ENCODE measurements at regions of chr9 and their contacts with region 1.

Region 1: DNA sequence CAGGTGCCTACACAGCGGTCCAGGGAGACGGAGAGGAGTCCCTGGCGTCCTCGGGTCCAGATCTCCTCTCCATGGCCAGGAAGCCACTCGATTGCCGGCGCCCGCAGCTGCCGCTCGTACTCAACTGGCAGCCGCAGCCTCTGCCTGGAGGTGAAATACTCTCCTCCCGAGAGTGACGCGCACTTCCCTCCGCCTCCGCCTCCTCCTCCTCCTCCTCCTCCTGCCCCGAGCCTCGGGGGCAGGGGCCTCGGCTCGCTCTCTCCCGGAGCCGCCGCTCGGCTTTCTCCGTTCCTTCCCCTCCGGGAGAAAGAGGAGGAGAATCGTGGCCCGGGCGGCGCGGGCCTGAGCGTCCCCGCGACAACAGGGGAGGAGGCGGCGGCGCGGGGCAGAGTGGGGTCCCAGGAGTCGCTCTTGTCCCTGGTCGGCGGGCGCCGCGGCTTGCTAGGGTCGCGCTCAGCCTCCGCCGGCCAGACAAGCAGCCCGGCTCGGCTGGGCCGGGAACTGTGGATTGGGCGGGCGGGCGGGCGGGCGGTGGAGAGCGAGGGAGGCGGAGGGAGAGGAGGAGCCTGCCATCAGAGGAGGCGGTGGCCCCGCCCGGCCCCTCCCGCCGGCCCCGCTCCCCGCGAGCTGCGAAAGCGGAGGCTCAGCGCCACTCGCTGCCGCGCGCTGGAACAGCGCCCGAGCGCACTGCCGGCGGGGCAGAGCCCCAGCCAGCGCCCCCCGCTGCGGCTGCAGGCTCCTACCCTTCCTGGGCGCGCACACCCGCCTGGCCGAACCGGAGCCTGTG is at the start of gene CEMIP2:
- DNase-seq: peak; percentile 82 to 94 (median 87)
- ATAC-seq: peak; percentile 78
- H3K4me3 ChIP-seq: peak within 1 kb of the TSS; percentile 72
- H3K4me3 Mint-ChIP-seq: peak within 1 kb of the TSS; percentile 98
- H3K27ac ChIP-seq: peak within 1 kb of the TSS; percentile 89
- H3K27ac Mint-ChIP-seq: peak within 1 kb of the TSS; percentile 99
- H3K4me1 ChIP-seq: peaks cover 36% of the 10 kb centered on the region
- H3K4me1 Mint-ChIP-seq: peaks cover 46% of the 10 kb centered on the region
- H3K27me3 ChIP-seq: no peaks in the 10 kb centered on the region
- H3K27me3 Mint-ChIP-seq: no peaks in the 10 kb centered on the region
- CTCF ChIP-seq: peak; percentile 58
- total RNA-seq, gene CEMIP2: 301 to 305 TPM

Region 2: DNA sequence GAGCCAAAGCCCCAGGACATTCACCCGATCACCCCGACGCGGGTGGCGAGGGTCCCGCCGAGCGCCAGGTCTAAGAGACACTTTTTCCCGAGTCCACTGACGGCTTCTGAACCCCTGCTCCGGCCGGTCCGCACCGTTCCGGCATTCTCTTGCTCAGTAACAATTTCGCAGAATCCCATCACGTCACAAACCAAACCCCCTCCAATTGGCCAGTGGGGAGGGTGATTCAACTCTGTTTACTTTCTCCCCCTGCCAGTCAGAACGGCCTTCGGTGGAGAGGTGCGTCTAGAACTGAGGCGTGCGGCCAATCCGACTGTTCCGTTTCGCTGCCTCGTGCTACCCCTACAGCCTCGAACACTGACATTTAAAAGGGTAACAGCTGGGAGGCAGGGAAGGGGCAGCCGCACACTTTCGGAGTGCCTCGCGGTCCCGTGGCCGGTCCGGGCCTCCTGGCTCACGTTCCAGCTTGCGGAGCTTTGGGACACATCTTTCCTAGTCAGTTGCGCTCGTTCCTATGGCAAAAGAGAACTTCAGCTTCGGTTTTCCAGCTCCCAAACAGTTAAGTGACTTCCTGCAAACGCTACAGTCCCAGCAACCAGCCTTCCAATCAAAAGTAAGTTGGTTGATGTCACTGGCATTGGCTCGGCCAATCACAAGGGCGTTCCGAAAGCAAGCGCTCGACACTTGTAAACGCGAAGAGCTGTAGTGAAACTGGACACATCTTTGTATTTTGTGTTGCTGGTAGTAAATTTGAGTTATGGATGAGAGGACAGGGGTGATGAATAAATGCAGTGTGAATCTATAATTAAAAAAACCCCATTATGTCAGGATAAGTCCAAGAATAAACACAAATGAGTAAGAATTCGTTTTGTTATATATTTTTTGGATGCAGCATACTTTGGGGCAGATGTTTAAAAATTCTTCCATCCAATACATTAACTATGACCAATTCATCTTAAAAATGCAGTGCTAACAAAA is 1354.5 kb before region 1 on chr9 and contains the start of gene KLF9:
- CTCF ChIA-PET with region 1: no interaction called
- POLR2A ChIA-PET with region 1: interaction called, 4 read pairs
- intact Hi-C with region 1: loop called in 1 of 2 experiments (anchors 5 kb)
- DNase-seq: peak; percentile 81 to 98 (median 86)
- ATAC-seq: peak; percentile 80
- H3K4me3 ChIP-seq: peak within 1 kb of the TSS; percentile 93
- H3K4me3 Mint-ChIP-seq: peak within 1 kb of the TSS; percentile 98
- H3K27ac ChIP-seq: peak within 1 kb of the TSS; percentile 97 to 99
- H3K27ac Mint-ChIP-seq: peak within 1 kb of the TSS; percentile 100
- H3K4me1 ChIP-seq: peaks cover 46% of the 10 kb centered on the region
- H3K4me1 Mint-ChIP-seq: peaks cover 60% of the 10 kb centered on the region
- H3K27me3 ChIP-seq: no peaks in the 10 kb centered on the region
- H3K27me3 Mint-ChIP-seq: no peaks in the 10 kb centered on the region
- CTCF ChIP-seq: no peak
- total RNA-seq, gene KLF9: 132 to 135 TPM

Region 3: DNA sequence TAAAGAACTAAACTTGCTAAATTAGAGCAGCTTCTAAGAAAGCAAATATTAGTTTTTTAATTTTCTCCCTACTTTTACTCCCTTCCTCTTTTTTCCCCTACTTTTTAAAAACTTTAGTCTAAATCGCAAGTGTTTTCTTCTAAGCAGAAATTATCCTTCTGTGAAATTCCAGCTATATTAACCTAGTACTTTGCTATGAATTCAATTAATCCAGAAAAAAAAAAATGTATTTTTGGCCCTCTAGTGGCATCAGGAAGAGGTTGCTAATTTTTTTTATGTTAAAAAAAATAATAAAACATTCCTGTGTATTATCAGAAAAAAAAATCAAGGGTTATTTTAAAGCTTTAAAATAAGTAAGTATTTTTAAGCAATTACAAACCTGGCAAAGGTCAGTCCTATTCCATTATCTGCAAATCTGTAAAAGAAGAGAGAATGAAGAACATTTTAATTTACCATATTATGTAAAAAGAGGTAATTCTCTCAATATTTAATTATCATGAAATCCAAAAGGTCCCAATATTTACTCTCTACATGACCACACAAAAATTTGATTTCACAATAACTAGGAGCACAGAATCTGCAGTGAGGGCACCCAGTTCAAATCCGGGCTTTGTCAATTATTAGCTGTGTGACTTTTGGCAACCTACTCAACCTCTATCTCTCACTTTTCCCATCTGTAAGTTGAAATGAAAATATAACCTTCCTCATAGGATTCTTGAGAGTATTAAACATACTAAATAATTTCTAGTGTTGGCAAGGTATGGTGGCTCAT is 52.3 kb before region 1 on chr9:
- CTCF ChIA-PET with region 1: interaction called, 15 read pairs
- POLR2A ChIA-PET with region 1: interaction called, 3 read pairs
- intact Hi-C with region 1: loop called in 1 of 2 experiments (anchors 5 kb)
- DNase-seq: peak in 1 of 14 experiments; percentile 14
- ATAC-seq: no peak
- H3K4me3 ChIP-seq: no peak overlapping the region
- H3K4me3 Mint-ChIP-seq: no peak overlapping the region
- H3K27ac ChIP-seq: no peak overlapping the region
- H3K27ac Mint-ChIP-seq: no peak overlapping the region
- H3K4me1 ChIP-seq: no peaks in the 10 kb centered on the region
- H3K4me1 Mint-ChIP-seq: peaks cover 24% of the 10 kb centered on the region
- H3K27me3 ChIP-seq: no peaks in the 10 kb centered on the region
- H3K27me3 Mint-ChIP-seq: no peaks in the 10 kb centered on the region
- CTCF ChIP-seq: peak; percentile 69

Region 4: GRCh38 chr9:71783120-71783530 is 14.5 kb after region 1 on chr9:
- CTCF ChIA-PET with region 1: interaction called, 34 read pairs
- POLR2A ChIA-PET with region 1: interaction called, 154 read pairs
- intact Hi-C with region 1: loop called (anchors 1 kb)
- DNase-seq: peak; percentile 74 to 96 (median 82)
- ATAC-seq: peak; percentile 94
- H3K4me3 ChIP-seq: peak overlapping the region; percentile 8
- H3K4me3 Mint-ChIP-seq: peak overlapping the region; percentile 64
- H3K27ac ChIP-seq: peak overlapping the region; percentile 81 to 90
- H3K27ac Mint-ChIP-seq: peak overlapping the region; percentile 97
- H3K4me1 ChIP-seq: peaks cover 32% of the 10 kb centered on the region
- H3K4me1 Mint-ChIP-seq: peaks cover 51% of the 10 kb centered on the region
- H3K27me3 ChIP-seq: no peaks in the 10 kb centered on the region
- H3K27me3 Mint-ChIP-seq: no peaks in the 10 kb centered on the region
- CTCF ChIP-seq: peak; percentile 65

Region 5: GRCh38 chr9:71819115-71819739 is 50.6 kb after region 1 on chr9:
- CTCF ChIA-PET with region 1: interaction called, 5 read pairs
- POLR2A ChIA-PET with region 1: interaction called, 31 read pairs
- intact Hi-C with region 1: loop called in 1 of 2 experiments (anchors 2 kb)
- DNase-seq: peak; percentile 12 to 82 (median 46)
- ATAC-seq: no peak
- H3K4me3 ChIP-seq: no peak overlapping the region
- H3K4me3 Mint-ChIP-seq: no peak overlapping the region
- H3K27ac ChIP-seq: no peak overlapping the region
- H3K27ac Mint-ChIP-seq: no peak overlapping the region
- H3K4me1 ChIP-seq: peaks cover 4% of the 10 kb centered on the region
- H3K4me1 Mint-ChIP-seq: peaks cover 23% of the 10 kb centered on the region
- H3K27me3 ChIP-seq: no peaks in the 10 kb centered on the region
- H3K27me3 Mint-ChIP-seq: no peaks in the 10 kb centered on the region
- CTCF ChIP-seq: peak; percentile 95

Region 6: GRCh38 chr9:72364679-72365524 is 596.3 kb after region 1 on chr9 and contains the start of gene ZFAND5:
- CTCF ChIA-PET with region 1: no interaction called
- POLR2A ChIA-PET with region 1: interaction called, 5 read pairs
- intact Hi-C with region 1: loop called (anchors 10 kb)
- DNase-seq: peak; percentile 87 to 99 (median 92)
- ATAC-seq: peak; percentile 77
- H3K4me3 ChIP-seq: peak within 1 kb of the TSS; percentile 90
- H3K4me3 Mint-ChIP-seq: peak within 1 kb of the TSS; percentile 99
- H3K27ac ChIP-seq: peak within 1 kb of the TSS; percentile 97 to 99
- H3K27ac Mint-ChIP-seq: peak within 1 kb of the TSS; percentile 99
- H3K4me1 ChIP-seq: peaks cover 16% of the 10 kb centered on the region
- H3K4me1 Mint-ChIP-seq: peaks cover 51% of the 10 kb centered on the region
- H3K27me3 ChIP-seq: no peaks in the 10 kb centered on the region
- H3K27me3 Mint-ChIP-seq: no peaks in the 10 kb centered on the region
- CTCF ChIP-seq: no peak
- total RNA-seq, gene ZFAND5: 368 TPM